ENCODE measurements at regions of chr4 and their contacts with region 1.

Region 1: DNA sequence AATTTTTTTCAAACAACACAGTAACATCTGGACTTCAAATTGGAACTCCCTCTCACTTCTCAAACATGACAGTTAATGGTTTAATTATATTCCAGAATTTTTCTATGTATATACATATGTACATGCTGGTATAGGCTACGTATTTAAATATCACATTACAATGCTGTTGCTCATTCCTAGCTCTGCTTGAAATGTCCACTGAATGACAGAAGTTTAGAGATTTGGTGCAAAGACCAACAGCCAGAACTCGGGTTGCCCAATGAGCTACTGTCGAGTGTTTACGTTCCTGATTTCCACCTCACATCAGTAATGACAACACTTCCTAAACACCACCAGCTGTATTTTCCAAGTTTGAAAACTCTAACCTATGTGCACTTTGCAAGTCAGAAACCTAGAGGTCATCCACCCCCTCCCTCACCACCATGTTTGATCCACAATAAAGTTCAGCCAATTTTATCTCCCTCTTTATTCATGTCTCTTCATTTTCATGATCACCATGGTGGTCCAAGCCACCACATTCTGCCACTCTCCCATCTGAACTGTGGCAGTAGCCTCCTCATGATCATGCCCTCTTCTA is 49.3 kb upstream of the RPL34 start:
- DNase-seq: no peak
- ATAC-seq: no peak
- H3K4me3 Mint-ChIP-seq: no peak overlapping the region
- H3K27ac Mint-ChIP-seq: no peak overlapping the region
- H3K4me1 Mint-ChIP-seq: no peaks in the 10 kb centered on the region
- H3K27me3 Mint-ChIP-seq: peaks cover 7% of the 10 kb centered on the region
- CTCF ChIP-seq: no peak

Region 2: DNA sequence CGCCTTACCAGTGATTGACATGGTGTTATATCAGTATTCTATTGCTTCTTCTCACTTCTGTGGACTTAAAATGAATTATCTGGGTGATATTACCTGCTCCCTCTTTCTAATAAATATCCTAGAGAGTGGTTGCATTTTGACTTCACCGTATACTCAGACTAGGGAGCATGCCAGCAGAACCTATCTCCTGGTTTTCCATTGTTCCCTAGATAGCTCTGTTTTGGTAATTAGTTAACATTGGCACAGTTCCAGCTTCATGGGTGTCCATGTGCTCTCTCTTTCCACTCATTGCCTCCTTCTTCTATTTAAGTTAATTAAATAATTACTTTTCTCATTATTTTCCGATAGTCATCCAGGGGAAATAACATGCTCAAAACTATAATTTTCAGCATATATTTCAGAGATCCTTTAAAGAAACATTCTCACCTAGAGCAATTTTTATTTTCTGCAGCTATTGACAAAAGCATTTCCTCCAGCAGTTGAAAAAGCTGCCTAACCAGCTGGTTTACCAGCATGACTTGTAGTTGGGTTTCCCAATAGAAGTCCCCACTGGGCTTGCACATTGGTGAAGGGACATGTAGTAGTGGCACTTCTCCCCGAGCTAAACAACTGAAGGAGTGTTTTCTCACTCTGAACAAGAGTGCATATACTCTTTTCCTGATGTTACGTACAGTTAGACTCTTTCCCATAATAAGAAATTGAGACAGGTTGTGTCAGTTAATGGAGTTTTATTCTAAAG is 823.2 kb before region 1 on chr4:
- CTCF ChIA-PET with region 1: no interaction called
- POLR2A ChIA-PET with region 1: no interaction called
- intact Hi-C with region 1: no loop called
- DNase-seq: no peak
- ATAC-seq: no peak
- H3K4me3 Mint-ChIP-seq: no peak overlapping the region
- H3K27ac Mint-ChIP-seq: no peak overlapping the region
- H3K4me1 Mint-ChIP-seq: no peaks in the 10 kb centered on the region
- H3K27me3 Mint-ChIP-seq: peaks cover 23% of the 10 kb centered on the region
- CTCF ChIP-seq: no peak

Region 3: GRCh38 chr4:107757864-107758476 is 813.1 kb before region 1 on chr4:
- CTCF ChIA-PET with region 1: interaction called, 10 read pairs
- POLR2A ChIA-PET with region 1: no interaction called
- intact Hi-C with region 1: loop called (anchors 1 kb)
- DNase-seq: no peak
- ATAC-seq: no peak
- H3K4me3 Mint-ChIP-seq: no peak overlapping the region
- H3K27ac Mint-ChIP-seq: no peak overlapping the region
- H3K4me1 Mint-ChIP-seq: peaks cover 10% of the 10 kb centered on the region
- H3K27me3 Mint-ChIP-seq: peaks cover 4% of the 10 kb centered on the region
- CTCF ChIP-seq: no peak

Region 4: DNA sequence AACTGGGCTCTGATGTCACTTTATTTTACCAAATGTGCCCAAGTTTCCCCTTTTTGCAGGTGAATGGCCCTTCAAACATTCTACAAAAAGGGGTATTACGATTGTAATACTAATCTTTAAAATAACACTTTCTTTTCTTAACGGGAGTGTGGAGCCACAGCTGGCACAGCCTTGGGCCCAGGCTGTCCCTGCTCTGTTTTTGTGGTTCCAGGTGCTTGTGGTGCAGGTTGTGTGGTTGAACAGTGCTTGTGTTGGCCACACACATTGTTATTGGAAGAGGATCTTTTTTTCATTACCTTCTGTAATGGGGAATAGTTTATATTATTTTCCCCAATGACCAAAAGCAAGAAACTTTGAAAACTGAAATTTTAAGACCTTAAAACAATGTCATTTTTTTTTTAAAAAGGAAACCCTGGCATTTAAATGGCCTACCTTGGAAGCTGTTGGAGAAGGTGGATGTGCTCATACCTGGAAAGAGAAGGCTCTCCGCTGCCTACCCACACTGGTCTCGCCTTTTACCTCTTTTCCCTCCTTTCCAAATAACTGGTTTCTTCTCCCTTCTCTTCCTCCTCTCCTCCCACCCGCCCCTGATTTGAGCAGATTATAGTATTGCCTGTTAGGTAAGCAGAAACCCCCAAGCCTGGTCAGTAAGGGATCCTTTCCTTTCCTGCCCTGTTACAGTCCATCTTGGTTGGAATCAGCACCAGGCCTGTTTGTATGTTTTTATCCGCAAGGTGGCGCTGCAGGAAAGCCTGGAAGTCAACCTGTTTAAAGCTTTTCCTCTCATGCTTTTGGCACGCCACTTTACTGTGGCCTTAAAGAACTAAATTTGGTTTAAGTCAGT is 552.8 kb before region 1 on chr4:
- CTCF ChIA-PET with region 1: interaction called, 89 read pairs
- POLR2A ChIA-PET with region 1: no interaction called
- intact Hi-C with region 1: loop called (anchors 1 kb)
- DNase-seq: peak; percentile 45
- ATAC-seq: peak; percentile 47
- H3K4me3 Mint-ChIP-seq: no peak overlapping the region
- H3K27ac Mint-ChIP-seq: no peak overlapping the region
- H3K4me1 Mint-ChIP-seq: peaks cover 2% of the 10 kb centered on the region
- H3K27me3 Mint-ChIP-seq: no peaks in the 10 kb centered on the region
- CTCF ChIP-seq: no peak

Region 5: GRCh38 chr4:108030332-108030731 is 540.7 kb before region 1 on chr4:
- CTCF ChIA-PET with region 1: interaction called, 17 read pairs
- POLR2A ChIA-PET with region 1: no interaction called
- intact Hi-C with region 1: loop called (anchors 1 kb)
- DNase-seq: no peak
- ATAC-seq: no peak
- H3K4me3 Mint-ChIP-seq: no peak overlapping the region
- H3K27ac Mint-ChIP-seq: no peak overlapping the region
- H3K4me1 Mint-ChIP-seq: peaks cover 3% of the 10 kb centered on the region
- H3K27me3 Mint-ChIP-seq: no peaks in the 10 kb centered on the region
- CTCF ChIP-seq: no peak

Region 6: DNA sequence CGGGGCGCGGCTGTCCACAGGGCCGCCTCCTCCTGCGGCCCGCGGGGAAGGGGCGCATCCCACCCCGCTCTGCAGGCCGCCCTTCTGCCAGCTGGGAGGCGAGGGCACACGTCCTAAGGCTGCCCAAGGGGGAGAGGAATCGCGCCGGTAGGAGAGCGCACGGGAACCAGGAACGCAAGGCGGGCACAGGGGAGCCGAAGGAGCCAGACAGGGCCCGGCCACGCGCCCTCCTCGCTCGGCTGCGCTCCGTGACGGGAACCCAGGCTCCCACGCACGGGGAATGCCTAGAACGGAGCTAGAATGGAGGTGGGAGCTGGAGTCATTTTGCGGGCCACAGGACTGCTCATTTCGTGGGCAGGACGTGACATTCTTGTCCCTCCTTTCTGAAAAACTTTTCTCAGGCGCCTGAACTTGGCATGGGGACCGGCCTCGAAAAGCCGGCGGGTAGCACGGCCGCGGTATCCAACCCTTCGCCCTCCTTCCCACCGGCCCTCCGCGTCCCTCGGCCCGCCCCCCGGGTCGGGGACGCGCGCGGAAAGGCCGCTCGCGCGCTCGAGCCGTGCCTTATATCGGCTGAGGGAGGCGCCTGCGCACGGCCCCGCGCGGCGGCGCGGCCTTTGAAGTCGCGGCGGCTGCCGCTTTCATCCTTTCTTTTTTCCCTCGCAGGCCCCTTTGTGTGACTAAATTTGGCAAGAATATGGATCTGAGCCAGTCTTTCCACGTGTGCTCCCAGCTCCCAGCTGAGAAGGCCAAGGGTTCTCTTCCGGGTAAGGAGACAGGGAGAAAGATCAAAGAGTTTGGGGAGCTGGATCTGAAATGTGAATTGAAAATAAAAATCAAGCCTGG is 398.1 kb before region 1 on chr4:
- CTCF ChIA-PET with region 1: interaction called, 4 read pairs
- POLR2A ChIA-PET with region 1: no interaction called
- intact Hi-C with region 1: loop called (anchors 5 kb)
- DNase-seq: peak; percentile 26
- ATAC-seq: peak; percentile 63
- H3K4me3 Mint-ChIP-seq: peak overlapping the region; percentile 82
- H3K27ac Mint-ChIP-seq: no peak overlapping the region
- H3K4me1 Mint-ChIP-seq: peaks cover 42% of the 10 kb centered on the region
- H3K27me3 Mint-ChIP-seq: peaks cover 52% of the 10 kb centered on the region
- CTCF ChIP-seq: no peak

Measured in activated B cell treated with CpG ODN at 0.5 μM for 24 hours (primary cell).